Naive thymus-derived CD4-positive, alpha-beta T cell (primary cell): ENCODE measurements at regions of chr17 and their contacts with region 1.

Region 1: GRCh38 chr17:29293890-29294579 is at the start of gene NUFIP2:
- DNase-seq: peak; percentile 93 to 99 (median 98)
- ATAC-seq: peak; percentile 93
- H3K4me3 ChIP-seq: peak within 1 kb of the TSS; percentile 98
- H3K4me3 Mint-ChIP-seq: peak within 1 kb of the TSS; percentile 99 to 100 (median 100)
- H3K27ac ChIP-seq: peak within 1 kb of the TSS; percentile 90
- H3K27ac Mint-ChIP-seq: peak within 1 kb of the TSS; percentile 97 to 100 (median 99)
- H3K4me1 ChIP-seq: peaks cover 28 to 36% of the 10 kb centered on the region in 2 donors
- H3K4me1 Mint-ChIP-seq: peaks cover 26 to 45% (median 41%) of the 10 kb centered on the region in 7 donors
- H3K27me3 ChIP-seq: no peaks in the 10 kb centered on the region
- H3K27me3 Mint-ChIP-seq: peaks cover 0 to 4% (median 0%) of the 10 kb centered on the region in 5 donors
- total RNA-seq, gene NUFIP2: 60.4 to 85.3 (median 73.0) TPM

Region 2: DNA sequence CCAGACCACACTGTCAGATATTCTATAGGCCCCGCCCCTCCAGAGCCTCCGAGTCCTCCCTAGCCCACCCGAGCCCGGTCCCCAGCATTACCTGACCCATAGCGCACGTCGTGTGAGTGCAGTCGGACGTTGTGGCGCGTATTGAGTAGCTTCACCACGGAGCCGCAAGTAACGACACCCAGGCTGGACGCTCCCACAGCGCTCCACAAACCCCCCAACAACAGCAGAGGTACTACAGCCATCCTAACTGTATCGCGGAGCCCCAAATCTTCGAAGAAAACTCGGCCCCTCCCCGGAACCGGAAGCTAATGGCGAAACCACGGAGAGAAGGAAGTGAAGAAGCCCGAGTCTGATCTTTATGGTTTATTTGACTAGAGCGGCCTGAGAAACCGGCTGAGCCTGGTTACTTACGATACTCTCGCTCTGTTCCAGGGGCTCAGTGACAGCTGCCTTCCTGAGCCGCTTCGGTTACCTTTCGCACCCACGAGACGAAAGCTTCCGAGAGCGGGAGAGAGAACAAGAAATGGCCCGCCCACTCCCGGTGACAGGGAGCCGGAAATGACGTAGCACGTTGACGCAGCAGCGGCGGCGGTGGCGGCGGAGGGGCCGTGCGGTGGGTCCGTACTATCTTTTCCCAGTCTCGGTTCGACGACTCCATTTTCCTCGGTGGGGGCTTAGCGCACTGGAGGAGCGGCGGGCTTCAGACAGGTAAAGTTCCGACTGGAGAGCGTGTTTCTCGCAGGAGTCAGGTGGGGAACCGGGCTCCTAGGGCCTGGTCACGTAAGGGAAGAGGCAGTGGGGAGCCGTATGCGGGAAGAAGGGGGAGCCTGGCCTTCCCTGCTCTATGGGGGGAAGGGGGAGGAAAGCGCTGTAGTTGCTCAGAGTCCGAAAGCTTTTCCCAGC is 632.1 kb before region 1 on chr17 and contains the starts of genes SDF2 and SUPT6H:
- CTCF ChIA-PET with region 1: no interaction called
- POLR2A ChIA-PET with region 1: no interaction called
- intact Hi-C with region 1: loop called in 1 of 2 experiments (anchors 5 kb)
- DNase-seq: peak; percentile 91 to 97 (median 95)
- ATAC-seq: peak; percentile 91
- H3K4me3 ChIP-seq: peak within 1 kb of the TSS; percentile 72
- H3K4me3 Mint-ChIP-seq: peak within 1 kb of the TSS; percentile 86 to 100 (median 99)
- H3K27ac ChIP-seq: peak within 1 kb of the TSS; percentile 90
- H3K27ac Mint-ChIP-seq: peak within 1 kb of the TSS; percentile 98 to 100 (median 100)
- H3K4me1 ChIP-seq: peaks cover 24 to 35% of the 10 kb centered on the region in 2 donors
- H3K4me1 Mint-ChIP-seq: peaks cover 45 to 73% (median 67%) of the 10 kb centered on the region in 7 donors
- H3K27me3 ChIP-seq: no peaks in the 10 kb centered on the region
- H3K27me3 Mint-ChIP-seq: no peaks in the 10 kb centered on the region
- total RNA-seq, gene SDF2: 28.6 to 49.5 (median 43.8) TPM
- total RNA-seq, gene SUPT6H: 91.2 to 132 (median 98.5) TPM

Region 3: GRCh38 chr17:29140051-29140621 is 153.9 kb before region 1 on chr17:
- CTCF ChIA-PET with region 1: interaction called, 3 read pairs
- POLR2A ChIA-PET with region 1: interaction called, 5 read pairs
- intact Hi-C with region 1: loop called (anchors 1 to 2 kb)
- DNase-seq: peak in 8 of 9 donors; percentile 48 to 81 (median 51)
- ATAC-seq: peak; percentile 73
- H3K4me3 ChIP-seq: peak overlapping the region; percentile 76
- H3K4me3 Mint-ChIP-seq: peak overlapping the region; percentile 83 to 98 (median 91)
- H3K27ac ChIP-seq: peak overlapping the region; percentile 79
- H3K27ac Mint-ChIP-seq: peak overlapping the region; percentile 88 to 98 (median 96)
- H3K4me1 ChIP-seq: peaks cover 35 to 43% of the 10 kb centered on the region in 2 donors
- H3K4me1 Mint-ChIP-seq: peaks cover 54 to 75% (median 66%) of the 10 kb centered on the region in 7 donors
- H3K27me3 ChIP-seq: no peaks in the 10 kb centered on the region
- H3K27me3 Mint-ChIP-seq: no peaks in the 10 kb centered on the region

Region 4: GRCh38 chr17:29219378-29220047 is 74.5 kb before region 1 on chr17:
- CTCF ChIA-PET with region 1: interaction called, 4 read pairs
- POLR2A ChIA-PET with region 1: no interaction called
- intact Hi-C with region 1: loop called in 1 of 2 experiments (anchors 1 kb)
- DNase-seq: peak; percentile 41 to 73 (median 62)
- ATAC-seq: peak; percentile 94
- H3K4me3 ChIP-seq: no peak overlapping the region
- H3K4me3 Mint-ChIP-seq: no peak overlapping the region
- H3K27ac ChIP-seq: no peak overlapping the region
- H3K27ac Mint-ChIP-seq: peak overlapping the region in 2 of 9 donors; percentile 3 to 12
- H3K4me1 ChIP-seq: no peaks in the 10 kb centered on the region
- H3K4me1 Mint-ChIP-seq: peaks cover 0 to 10% (median 5%) of the 10 kb centered on the region in 7 donors
- H3K27me3 ChIP-seq: no peaks in the 10 kb centered on the region
- H3K27me3 Mint-ChIP-seq: peaks cover 0 to 13% (median 0%) of the 10 kb centered on the region in 5 donors

Region 5: DNA sequence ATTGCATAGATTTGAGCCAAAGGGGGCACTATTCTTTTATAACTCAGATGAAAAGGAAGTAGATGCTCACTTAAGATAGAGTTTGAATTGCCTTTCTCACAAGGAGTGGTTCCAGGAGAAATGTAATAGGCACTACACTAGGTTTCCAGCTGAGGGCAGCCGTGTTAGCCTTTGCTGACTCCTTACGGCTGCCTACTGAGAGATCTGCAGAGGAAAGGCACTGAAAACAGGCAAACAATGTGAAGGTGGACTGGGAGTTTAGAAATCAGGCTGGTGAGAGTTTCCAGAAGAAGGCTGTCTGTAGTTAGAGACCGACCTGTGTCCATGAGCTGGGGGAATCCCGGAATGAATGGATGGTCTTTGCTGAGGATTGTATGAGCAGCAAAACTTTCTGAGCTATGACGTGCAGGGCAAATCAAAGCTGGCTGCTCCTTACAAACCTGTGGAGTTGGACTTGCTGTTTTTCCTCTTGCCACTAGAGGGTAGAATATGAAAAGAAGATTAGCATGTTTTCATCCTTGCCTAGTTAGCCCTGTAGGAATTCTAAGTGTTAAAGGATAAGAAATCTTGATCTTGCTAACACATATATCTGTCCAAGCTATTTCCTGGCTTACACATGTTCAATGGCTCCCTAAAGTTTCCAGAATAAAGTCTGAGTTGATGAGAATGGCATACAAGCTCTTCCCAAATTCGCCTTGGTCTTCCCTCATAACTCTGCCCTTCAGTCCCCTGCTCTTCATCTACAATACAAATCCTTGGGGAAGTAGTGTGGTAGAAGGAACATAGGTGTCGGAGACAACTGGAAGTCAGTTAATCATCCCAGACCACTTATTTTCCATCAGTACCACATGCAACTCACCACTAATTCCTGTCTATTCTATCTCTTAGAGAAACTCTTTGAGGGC is 76.0 kb after region 1 on chr17:
- CTCF ChIA-PET with region 1: interaction called, 4 read pairs
- POLR2A ChIA-PET with region 1: interaction called, 8 read pairs
- intact Hi-C with region 1: loop called in 1 of 2 experiments (anchors 2 kb)
- DNase-seq: peak; percentile 25 to 80 (median 67)
- ATAC-seq: peak; percentile 95
- H3K4me3 ChIP-seq: no peak overlapping the region
- H3K4me3 Mint-ChIP-seq: no peak overlapping the region
- H3K27ac ChIP-seq: peak overlapping the region; percentile 63
- H3K27ac Mint-ChIP-seq: no peak overlapping the region
- H3K4me1 ChIP-seq: no peaks in the 10 kb centered on the region
- H3K4me1 Mint-ChIP-seq: no peaks in the 10 kb centered on the region
- H3K27me3 ChIP-seq: no peaks in the 10 kb centered on the region
- H3K27me3 Mint-ChIP-seq: peaks cover 0 to 2% (median 0%) of the 10 kb centered on the region in 5 donors

Region 6: DNA sequence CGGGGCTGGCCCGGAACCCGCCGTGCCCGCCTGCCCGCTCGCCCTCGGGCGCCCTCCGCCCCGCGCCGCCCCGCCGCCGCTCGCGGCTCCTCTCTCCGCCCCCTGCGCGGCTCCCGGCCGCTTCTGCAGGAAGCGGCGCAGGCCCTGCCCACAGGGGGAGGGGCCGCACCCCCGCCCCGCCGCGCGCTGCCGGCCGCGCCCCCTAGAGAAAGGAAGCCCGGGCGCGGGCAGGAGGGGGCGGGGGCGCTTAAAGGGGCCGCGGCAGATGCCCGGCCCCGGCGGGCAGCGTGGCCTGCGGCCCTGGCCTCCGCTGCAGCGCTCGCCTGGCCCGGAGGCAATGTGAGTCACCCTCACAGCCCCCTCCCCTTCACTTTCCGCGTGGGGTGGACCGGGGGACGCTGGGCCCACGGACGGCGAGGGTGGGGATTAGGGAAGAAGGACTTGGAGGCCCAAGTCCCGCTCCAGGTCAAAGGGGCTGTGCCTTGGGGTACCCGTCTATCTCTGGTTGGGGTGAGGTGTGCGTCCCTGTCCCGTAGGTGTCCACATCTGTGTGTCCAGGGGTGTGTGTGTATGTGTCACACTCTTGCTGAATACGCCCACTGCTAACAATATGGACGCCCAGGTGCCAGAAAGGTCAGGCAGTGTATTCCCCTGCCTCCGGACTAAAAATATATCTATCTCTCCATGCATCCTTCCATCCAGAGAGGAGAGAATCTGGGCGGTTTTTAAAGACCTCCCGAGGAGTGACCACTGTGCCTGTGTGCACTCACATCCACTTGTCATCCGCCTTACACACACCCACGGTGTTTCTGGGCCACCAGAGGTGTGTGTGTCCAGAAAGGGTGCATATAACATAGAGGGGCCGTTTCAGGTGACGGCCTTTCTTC is 295.7 kb after region 1 on chr17 and contains the start of gene GIT1:
- CTCF ChIA-PET with region 1: no interaction called
- POLR2A ChIA-PET with region 1: no interaction called
- intact Hi-C with region 1: loop called in 1 of 2 experiments (anchors 2 kb)
- DNase-seq: peak; percentile 77 to 88 (median 84)
- ATAC-seq: peak; percentile 93
- H3K4me3 ChIP-seq: peak within 1 kb of the TSS; percentile 72
- H3K4me3 Mint-ChIP-seq: peak within 1 kb of the TSS; percentile 88 to 96 (median 94)
- H3K27ac ChIP-seq: peak within 1 kb of the TSS; percentile 75
- H3K27ac Mint-ChIP-seq: peak within 1 kb of the TSS; percentile 78 to 94 (median 89)
- H3K4me1 ChIP-seq: peaks cover 58 to 65% of the 10 kb centered on the region in 2 donors
- H3K4me1 Mint-ChIP-seq: peaks cover 35 to 73% (median 66%) of the 10 kb centered on the region in 7 donors
- H3K27me3 ChIP-seq: no peaks in the 10 kb centered on the region
- H3K27me3 Mint-ChIP-seq: no peaks in the 10 kb centered on the region
- total RNA-seq, gene GIT1: 42.5 to 76.3 (median 62.4) TPM

Region 7: DNA sequence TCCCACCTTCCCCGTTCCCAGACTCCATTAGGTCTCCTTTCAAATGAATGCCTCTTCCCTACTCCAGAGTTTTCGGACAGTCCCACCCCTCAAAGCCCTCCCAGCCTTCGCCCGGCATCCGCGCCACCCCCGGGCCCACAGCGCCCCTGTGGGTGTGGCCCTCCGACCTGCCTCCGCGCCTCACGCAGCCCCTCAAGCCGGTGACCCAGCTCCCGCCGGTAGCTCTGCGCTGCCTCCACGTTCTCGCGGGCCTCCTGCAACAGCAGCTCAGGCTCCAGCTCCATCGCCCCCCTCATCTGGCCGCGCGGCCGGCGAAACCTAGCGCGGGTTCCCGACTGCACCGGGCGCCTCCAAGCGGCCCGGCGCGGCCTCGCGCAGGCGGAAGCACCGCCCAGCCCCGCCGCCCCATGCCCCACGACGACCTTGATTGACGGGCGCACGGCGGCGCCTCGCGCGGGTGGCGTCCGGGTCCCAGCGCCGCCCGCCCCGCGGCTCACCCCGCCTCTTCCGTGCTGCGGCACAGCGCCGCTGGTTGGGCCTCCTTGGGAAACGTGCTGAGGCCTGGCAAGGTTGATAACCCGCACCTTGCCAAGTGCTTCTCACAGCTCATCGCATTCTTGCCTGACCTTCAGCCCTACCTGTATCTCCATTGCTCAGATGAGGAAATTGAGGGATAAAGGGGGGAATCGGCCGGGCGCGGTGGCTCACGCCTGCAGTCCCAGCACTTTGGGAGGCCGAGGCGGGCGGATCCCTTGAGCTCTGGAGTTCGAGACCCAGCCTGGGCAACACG is 1530.5 kb after region 1 on chr17 and contains the start of gene CRLF3:
- CTCF ChIA-PET with region 1: no interaction called
- POLR2A ChIA-PET with region 1: no interaction called
- intact Hi-C with region 1: loop called in 1 of 2 experiments (anchors 2 kb)
- DNase-seq: peak; percentile 88 to 94 (median 92)
- ATAC-seq: peak; percentile 97
- H3K4me3 ChIP-seq: peak within 1 kb of the TSS; percentile 62
- H3K4me3 Mint-ChIP-seq: peak within 1 kb of the TSS; percentile 92 to 100 (median 98)
- H3K27ac ChIP-seq: peak within 1 kb of the TSS; percentile 91
- H3K27ac Mint-ChIP-seq: peak within 1 kb of the TSS; percentile 84 to 99 (median 91)
- H3K4me1 ChIP-seq: peaks cover 23 to 25% of the 10 kb centered on the region in 2 donors
- H3K4me1 Mint-ChIP-seq: peaks cover 25 to 42% (median 36%) of the 10 kb centered on the region in 7 donors
- H3K27me3 ChIP-seq: no peaks in the 10 kb centered on the region
- H3K27me3 Mint-ChIP-seq: no peaks in the 10 kb centered on the region
- total RNA-seq, gene CRLF3: 65.5 to 142 (median 86.7) TPM